GM18951 (cell line): ENCODE measurements at regions of chr14 and their contacts with region 1.

Region 1: GRCh38 chr14:33792720-33793368 is 158.0 kb downstream of the EGLN3 start:
- POLR2A ChIP-seq: no peak

Region 2: GRCh38 chr14:32576088-32576795 is 1216.6 kb before region 1 on chr14:
- in situ Hi-C with region 1: loop called (anchors 25 kb)
- POLR2A ChIP-seq: no peak

Region 3: GRCh38 chr14:32710731-32711680 is 1081.8 kb before region 1 on chr14:
- in situ Hi-C with region 1: loop called (anchors 25 kb)
- POLR2A ChIP-seq: no peak

Region 4: DNA sequence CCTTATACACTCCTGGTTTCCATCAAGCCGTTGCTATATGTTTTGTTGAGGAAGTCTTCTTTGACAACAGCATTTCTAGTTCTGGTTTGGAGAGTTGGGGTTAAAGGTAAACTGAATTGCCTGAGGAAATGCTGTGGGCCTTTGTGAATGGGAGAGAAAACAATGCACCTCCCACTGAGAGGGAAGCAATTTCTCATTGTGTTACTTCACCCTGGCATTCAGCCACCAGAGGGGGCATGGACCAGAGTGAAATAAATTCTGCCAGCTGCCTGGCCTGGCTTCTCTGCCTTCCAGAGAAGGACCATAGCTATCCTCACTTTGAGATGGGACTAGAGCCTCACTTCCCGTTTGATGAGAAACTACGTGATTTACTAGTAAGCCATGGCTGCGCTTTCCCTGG is 317.2 kb before region 1 on chr14:
- in situ Hi-C with region 1: loop called (anchors 10 kb)
- POLR2A ChIP-seq: no peak